ENCODE measurements at regions of chr1 and their contacts with region 1.

Region 1: GRCh38 chr1:35544978-35545377 is 12.2 kb downstream of the KIAA0319L start:
- DNase-seq: peak in 1 of 2 donors; percentile 67
- ATAC-seq: peak; percentile 81 to 93
- H3K4me3 ChIP-seq: no peak overlapping the region
- H3K27ac ChIP-seq: peak overlapping the region in 2 of 4 donors; percentile 13 to 27
- H3K4me1 ChIP-seq: peaks cover 31 to 38% of the 10 kb centered on the region in 2 donors
- H3K27me3 ChIP-seq: no peaks in the 10 kb centered on the region
- CTCF ChIP-seq: peak in 4 of 5 experiments; percentile 9 to 49 (median 30)
- POLR2A ChIP-seq: no peak

Region 2: DNA sequence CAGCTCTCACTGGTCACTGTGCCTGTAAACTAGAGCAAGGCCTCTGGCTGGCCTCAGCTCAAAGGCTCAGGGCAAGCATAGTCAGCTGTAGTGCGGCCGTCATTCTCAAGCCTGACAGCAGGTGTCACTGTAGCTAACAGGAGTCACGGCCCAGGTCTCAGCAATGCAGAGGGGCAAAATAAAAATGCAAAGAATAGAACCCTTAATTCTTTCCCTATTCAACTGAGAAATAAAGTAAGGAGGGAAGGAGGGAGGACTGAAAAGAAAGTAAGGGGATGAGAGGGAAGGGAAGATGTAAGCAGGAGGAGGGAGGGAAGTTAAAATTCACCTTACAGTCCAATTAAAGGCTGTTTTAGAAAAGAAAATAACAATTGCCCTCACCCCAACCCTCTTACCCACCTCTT is 93.9 kb before region 1 on chr1:
- in situ Hi-C with region 1: no loop called
- intact Hi-C with region 1: loop called (anchors 1 kb)
- DNase-seq: peak; percentile 29 to 63
- ATAC-seq: peak; percentile 79 to 85
- H3K4me3 ChIP-seq: no peak overlapping the region
- H3K27ac ChIP-seq: no peak overlapping the region
- H3K4me1 ChIP-seq: peaks cover 8 to 9% of the 10 kb centered on the region in 2 donors
- H3K27me3 ChIP-seq: no peaks in the 10 kb centered on the region
- CTCF ChIP-seq: peak; percentile 67 to 83 (median 76)
- POLR2A ChIP-seq: no peak

Region 3: DNA sequence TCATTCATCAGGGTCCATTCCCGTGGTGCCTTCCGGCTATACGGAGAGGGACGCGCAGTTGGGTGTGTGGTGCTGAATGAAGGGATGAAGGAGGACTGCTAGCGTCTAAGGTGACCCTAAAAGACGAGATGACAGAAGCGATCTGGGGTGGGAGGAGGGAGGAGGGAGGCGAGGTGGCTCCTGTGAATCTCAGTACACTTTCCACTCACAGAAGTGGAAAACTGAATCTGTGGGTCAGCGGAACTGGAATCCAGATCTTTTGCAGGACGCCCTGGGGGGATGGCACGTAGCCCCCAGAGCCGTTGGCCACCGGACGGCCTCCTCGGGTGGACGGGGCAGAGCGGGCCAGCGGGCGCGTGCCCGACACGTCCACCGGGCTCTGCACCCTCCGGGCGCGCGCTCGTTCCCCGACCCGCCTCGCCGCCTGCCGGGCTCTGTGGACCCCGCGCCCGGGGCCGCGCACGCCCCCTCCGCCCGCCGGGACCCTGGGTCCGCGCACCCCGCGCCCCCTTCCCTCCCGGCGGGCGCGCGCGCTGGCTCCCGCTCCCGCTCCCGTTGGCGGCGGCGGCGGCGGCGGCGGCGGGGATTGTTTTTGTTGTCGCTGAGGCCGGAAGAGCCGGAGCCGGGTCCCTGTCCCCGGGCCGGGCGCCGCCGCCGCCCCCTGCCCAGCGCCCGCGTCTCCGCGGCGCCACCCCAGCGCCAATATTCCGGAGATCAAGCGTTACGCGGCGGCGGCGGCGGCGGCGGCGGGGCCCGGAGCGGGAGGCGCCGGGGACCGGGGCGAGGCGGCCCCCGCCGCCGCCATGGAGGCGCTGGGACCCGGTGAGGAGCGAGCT is 262.9 kb after region 1 on chr1 and contains the start of gene AGO4:
- in situ Hi-C with region 1: no loop called
- intact Hi-C with region 1: no loop called
- DNase-seq: peak; percentile 35 to 44
- ATAC-seq: peak; percentile 78 to 81
- H3K4me3 ChIP-seq: peak within 1 kb of the TSS; percentile 81 to 92 (median 84)
- H3K27ac ChIP-seq: peak within 1 kb of the TSS; percentile 81 to 87 (median 84)
- H3K4me1 ChIP-seq: peaks cover 16 to 19% of the 10 kb centered on the region in 2 donors
- H3K27me3 ChIP-seq: no peaks in the 10 kb centered on the region
- CTCF ChIP-seq: peak in 1 of 5 experiments; percentile 31
- POLR2A ChIP-seq: peak in 1 of 2 donors; percentile 31
- total RNA-seq, gene AGO4: 14.9 to 34.7 (median 23.4) TPM